ENCODE measurements at regions of chr10 and their contacts with region 1.

Region 1: GRCh38 chr10:34723750-34724149 is 91.3 kb downstream of the PARD3 start:
- DNase-seq: peak; percentile 62
- H3K4me3 ChIP-seq: peak overlapping the region in 1 of 3 experiments; percentile 0
- H3K27ac ChIP-seq: no peak overlapping the region
- H3K4me1 ChIP-seq: peaks cover 55% of the 10 kb centered on the region
- H3K27me3 ChIP-seq: no peaks in the 10 kb centered on the region
- CTCF ChIP-seq: peak; percentile 32 to 71

Region 2: DNA sequence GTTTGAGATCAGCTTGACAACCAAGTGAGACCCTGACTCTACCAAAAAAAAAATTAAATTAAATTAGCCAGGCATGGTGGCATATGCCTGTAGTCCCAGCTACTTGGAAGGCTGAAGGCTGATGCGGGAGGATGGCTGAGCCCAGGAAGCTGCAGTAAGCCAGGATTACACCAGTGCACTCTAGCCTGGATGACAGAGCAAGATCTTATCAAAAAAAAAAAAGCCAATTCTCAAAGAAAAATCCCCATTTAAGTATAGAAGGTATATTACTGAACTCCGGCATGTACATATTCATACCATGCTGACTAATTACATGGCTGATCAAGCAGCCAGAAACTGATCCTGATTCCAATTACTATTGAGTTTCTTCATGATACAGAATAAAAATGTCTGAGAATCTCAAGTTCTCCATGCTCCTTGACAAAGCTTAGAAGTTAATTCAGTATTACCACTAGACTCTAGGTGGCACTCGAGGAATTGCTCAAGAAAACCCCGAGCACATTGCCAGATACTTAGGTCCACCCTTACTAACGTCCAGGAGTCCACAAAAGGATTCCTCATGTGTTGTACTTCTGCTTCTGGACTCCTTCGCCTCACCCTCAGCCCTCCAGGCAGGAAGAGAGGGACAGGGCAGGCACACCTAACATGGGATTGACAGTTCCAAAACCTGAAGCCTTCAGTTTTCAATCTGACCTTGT is 57.6 kb before region 1 on chr10:
- CTCF ChIA-PET with region 1: interaction called, 3 read pairs
- dilution Hi-C with region 1: no loop called
- in situ Hi-C with region 1: no loop called
- intact Hi-C with region 1: loop called (anchors 1 kb)
- DNase-seq: peak; percentile 89
- H3K4me3 ChIP-seq: peak overlapping the region in 1 of 3 experiments; percentile 10
- H3K27ac ChIP-seq: peak overlapping the region; percentile 84
- H3K4me1 ChIP-seq: peaks cover 44% of the 10 kb centered on the region
- H3K27me3 ChIP-seq: no peaks in the 10 kb centered on the region
- CTCF ChIP-seq: peak; percentile 60 to 71

Region 3: DNA sequence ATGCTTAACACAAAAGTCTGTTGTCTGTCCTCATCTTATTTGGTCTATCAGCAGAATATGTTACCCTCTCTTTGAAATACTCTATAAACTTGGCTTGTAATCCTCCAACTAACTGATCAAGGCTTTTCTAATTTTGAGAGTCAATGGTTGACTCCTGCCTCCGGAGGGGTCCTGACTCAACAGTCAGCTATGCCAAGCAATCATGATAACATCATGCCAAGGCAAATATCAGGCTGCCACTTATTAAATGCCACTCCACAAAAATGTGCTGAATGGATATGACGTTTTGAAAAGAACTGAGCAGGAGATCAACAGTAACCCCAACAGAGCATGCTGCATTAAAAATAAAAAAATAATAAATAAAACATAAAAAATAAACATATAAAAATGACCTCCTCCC is 24.8 kb before region 1 on chr10:
- CTCF ChIA-PET with region 1: no interaction called
- dilution Hi-C with region 1: no loop called
- in situ Hi-C with region 1: no loop called
- intact Hi-C with region 1: loop called (anchors 1 kb)
- DNase-seq: peak; percentile 76
- H3K4me3 ChIP-seq: no peak overlapping the region
- H3K27ac ChIP-seq: peak overlapping the region; percentile 56
- H3K4me1 ChIP-seq: peaks cover 68% of the 10 kb centered on the region
- H3K27me3 ChIP-seq: no peaks in the 10 kb centered on the region
- CTCF ChIP-seq: no peak

Region 4: GRCh38 chr10:34746094-34746493 is 22.3 kb after region 1 on chr10:
- CTCF ChIA-PET with region 1: no interaction called
- dilution Hi-C with region 1: no loop called
- in situ Hi-C with region 1: no loop called
- intact Hi-C with region 1: no loop called
- DNase-seq: peak; percentile 71
- H3K4me3 ChIP-seq: no peak overlapping the region
- H3K27ac ChIP-seq: no peak overlapping the region
- H3K4me1 ChIP-seq: peaks cover 47% of the 10 kb centered on the region
- H3K27me3 ChIP-seq: no peaks in the 10 kb centered on the region
- CTCF ChIP-seq: peak; percentile 6 to 17

Region 5: GRCh38 chr10:34824870-34825269 is 101.1 kb after region 1 on chr10:
- CTCF ChIA-PET with region 1: no interaction called
- dilution Hi-C with region 1: no loop called
- in situ Hi-C with region 1: no loop called
- intact Hi-C with region 1: loop called (anchors 1 kb)
- DNase-seq: no peak
- H3K4me3 ChIP-seq: no peak overlapping the region
- H3K27ac ChIP-seq: no peak overlapping the region
- H3K4me1 ChIP-seq: peaks cover 5% of the 10 kb centered on the region
- H3K27me3 ChIP-seq: no peaks in the 10 kb centered on the region
- CTCF ChIP-seq: no peak

Region 6: GRCh38 chr10:34988397-34989067 is 264.8 kb after region 1 on chr10:
- CTCF ChIA-PET with region 1: no interaction called
- dilution Hi-C with region 1: loop called (anchors 5 kb)
- in situ Hi-C with region 1: loop called in 1 of 2 experiments (anchors 25 kb)
- intact Hi-C with region 1: loop called (anchors 1 kb)
- DNase-seq: peak; percentile 81
- H3K4me3 ChIP-seq: no peak overlapping the region
- H3K27ac ChIP-seq: peak overlapping the region; percentile 51
- H3K4me1 ChIP-seq: peaks cover 29% of the 10 kb centered on the region
- H3K27me3 ChIP-seq: no peaks in the 10 kb centered on the region
- CTCF ChIP-seq: no peak

Region 7: GRCh38 chr10:35027567-35027966 is 303.8 kb after region 1 on chr10:
- CTCF ChIA-PET with region 1: no interaction called
- dilution Hi-C with region 1: no loop called
- in situ Hi-C with region 1: no loop called
- intact Hi-C with region 1: loop called (anchors 2 kb)
- DNase-seq: no peak
- H3K4me3 ChIP-seq: no peak overlapping the region
- H3K27ac ChIP-seq: no peak overlapping the region
- H3K4me1 ChIP-seq: peaks cover 10% of the 10 kb centered on the region
- H3K27me3 ChIP-seq: no peaks in the 10 kb centered on the region
- CTCF ChIP-seq: peak; percentile 32 to 41

Measured in mammary epithelial cell (primary cell).